GM12878 (cell line): ENCODE measurements at regions of chr17 and their contacts with region 1.

Region 1: GRCh38 chr17:28967221-28968140 is 16.2 kb upstream of the PHF12 start:
- DNase-seq: no peak
- ATAC-seq: peak; percentile 59
- H3K4me3 ChIP-seq: no peak overlapping the region
- H3K27ac ChIP-seq: no peak overlapping the region
- H3K4me1 ChIP-seq: peaks cover 3% of the 10 kb centered on the region; the same call in 1 of the 2 replicates
- H3K27me3 ChIP-seq: peaks cover 0 to 2% of the 10 kb centered on the region in 2 experiments; a peak in 1 of 4 replicates
- CTCF ChIP-seq: no peak
- EP300 ChIP-seq: no peak
- POLR2A ChIP-seq: no peak
- RAD21 ChIP-seq: no peak

Region 2: DNA sequence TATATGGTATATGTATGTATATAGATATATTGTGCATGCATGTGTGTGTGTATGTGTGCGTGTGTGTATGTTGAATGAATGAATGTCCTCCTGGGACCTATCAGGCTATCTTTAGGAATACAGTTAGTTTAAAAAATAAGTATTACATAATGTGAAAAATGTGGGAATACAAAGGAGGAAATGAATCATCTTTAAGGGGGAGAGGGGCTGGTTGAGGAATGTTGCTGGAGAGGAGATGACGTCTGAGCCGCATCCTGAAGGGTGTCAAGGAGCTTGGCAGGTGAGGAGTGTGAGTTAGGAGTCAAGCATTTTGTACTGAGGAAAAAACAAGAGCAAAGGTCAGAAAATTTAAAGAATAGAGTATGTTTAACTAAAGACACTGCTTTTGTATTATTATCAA is 987.4 kb before region 1 on chr17:
- CTCF ChIA-PET with region 1: no interaction called
- POLR2A ChIA-PET with region 1: no interaction called
- RAD21 ChIA-PET with region 1: no interaction called
- SMC1A ChIA-PET with region 1: no interaction called
- in situ Hi-C with region 1: no loop called
- intact Hi-C with region 1: no loop called
- DNase-seq: no peak
- ATAC-seq: no peak
- H3K4me3 ChIP-seq: no peak overlapping the region
- H3K27ac ChIP-seq: no peak overlapping the region
- H3K4me1 ChIP-seq: peaks cover 27% of the 10 kb centered on the region
- H3K27me3 ChIP-seq: no peaks in the 10 kb centered on the region; a peak in 1 of 4 replicates
- CTCF ChIP-seq: no peak
- EP300 ChIP-seq: no peak
- POLR2A ChIP-seq: no peak
- RAD21 ChIP-seq: no peak

Region 3: GRCh38 chr17:28698253-28698941 is 269.1 kb before region 1 on chr17:
- CTCF ChIA-PET with region 1: no interaction called
- POLR2A ChIA-PET with region 1: no interaction called
- RAD21 ChIA-PET with region 1: no interaction called
- SMC1A ChIA-PET with region 1: no interaction called
- in situ Hi-C with region 1: no loop called
- intact Hi-C with region 1: no loop called
- DNase-seq: no peak
- ATAC-seq: no peak
- H3K4me3 ChIP-seq: no peak overlapping the region
- H3K27ac ChIP-seq: no peak overlapping the region
- H3K4me1 ChIP-seq: no peaks in the 10 kb centered on the region
- H3K27me3 ChIP-seq: no peaks in the 10 kb centered on the region
- CTCF ChIP-seq: no peak
- EP300 ChIP-seq: no peak
- POLR2A ChIP-seq: no peak; the same call in 1 of the 2 replicates
- RAD21 ChIP-seq: no peak

Region 4: DNA sequence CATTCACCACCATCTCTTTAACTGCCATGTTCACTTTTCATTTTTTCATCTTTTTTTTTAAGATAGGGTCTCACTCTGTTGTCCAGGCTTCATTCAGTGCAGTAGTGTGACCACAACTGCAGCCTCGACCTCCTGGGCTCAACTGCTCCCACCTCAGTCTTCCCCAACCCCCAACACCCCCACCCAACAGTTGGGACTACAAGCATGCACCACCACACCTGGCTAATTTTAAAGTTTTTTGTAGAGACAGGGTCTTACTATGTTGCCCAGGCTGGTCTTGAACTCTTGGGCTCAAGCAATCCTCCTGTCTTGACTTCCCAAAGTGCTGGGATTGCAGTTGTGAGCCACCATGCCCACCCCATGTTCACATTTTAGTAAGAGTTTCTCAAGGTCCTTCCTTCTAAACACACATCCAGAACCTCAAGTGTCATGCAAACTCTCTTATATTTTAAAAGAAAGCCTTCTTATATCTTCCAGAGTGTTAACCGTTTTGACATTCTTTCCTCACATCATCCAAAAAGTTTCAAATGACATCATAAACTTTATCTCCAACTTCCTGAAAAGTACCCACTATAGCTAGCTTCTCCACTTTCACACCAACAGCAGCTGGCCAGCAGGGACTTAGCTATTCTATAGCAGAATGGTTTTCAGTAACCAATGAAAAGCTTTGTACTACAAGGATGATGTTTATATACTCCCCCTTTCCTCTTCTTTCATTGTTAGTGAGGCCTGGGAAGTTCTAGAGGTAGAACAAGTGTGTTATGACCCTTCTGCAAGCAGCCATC is 174.4 kb before region 1 on chr17:
- CTCF ChIA-PET with region 1: no interaction called
- POLR2A ChIA-PET with region 1: no interaction called
- RAD21 ChIA-PET with region 1: no interaction called
- SMC1A ChIA-PET with region 1: no interaction called
- in situ Hi-C with region 1: no loop called
- intact Hi-C with region 1: no loop called
- DNase-seq: no peak
- ATAC-seq: peak; percentile 66
- H3K4me3 ChIP-seq: no peak overlapping the region
- H3K27ac ChIP-seq: no peak overlapping the region
- H3K4me1 ChIP-seq: no peaks in the 10 kb centered on the region
- H3K27me3 ChIP-seq: no peaks in the 10 kb centered on the region
- CTCF ChIP-seq: no peak
- EP300 ChIP-seq: no peak
- POLR2A ChIP-seq: no peak
- RAD21 ChIP-seq: no peak

Region 5: DNA sequence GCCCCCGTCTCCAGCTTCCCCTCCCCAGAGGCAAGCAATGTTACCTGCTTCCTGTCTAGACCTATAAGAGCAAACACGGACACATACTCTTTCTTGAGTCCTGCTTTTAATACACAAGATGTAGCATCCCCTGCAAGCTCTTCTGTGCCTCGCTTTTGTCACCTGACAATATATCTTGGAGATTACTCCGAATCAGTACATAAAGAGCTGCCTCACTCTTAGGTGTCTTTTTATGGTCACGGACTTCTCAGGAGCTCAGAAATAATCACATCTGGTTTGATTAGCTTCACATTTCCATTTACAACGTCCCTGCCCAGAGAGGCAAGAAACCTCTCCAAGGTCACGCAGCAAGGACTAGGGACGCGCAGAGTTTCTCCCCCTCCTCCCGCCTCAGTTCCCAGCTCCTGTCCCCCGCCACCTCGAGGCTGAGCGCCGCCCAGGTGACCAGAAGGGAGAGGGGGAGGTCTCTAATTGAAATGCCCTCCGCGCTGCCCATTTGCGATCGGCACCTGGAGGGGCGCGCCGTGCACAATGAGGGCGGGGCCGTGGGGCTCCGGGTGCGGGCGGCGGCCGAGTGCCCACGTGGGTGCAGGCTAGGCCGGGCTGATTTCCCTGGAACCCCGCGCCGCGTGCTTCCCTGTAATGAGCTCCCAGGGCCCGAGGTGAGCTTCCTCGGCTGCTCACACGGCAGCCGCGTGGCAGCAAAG is 52.1 kb after region 1 on chr17:
- CTCF ChIA-PET with region 1: interaction called, 13 read pairs
- POLR2A ChIA-PET with region 1: no interaction called
- RAD21 ChIA-PET with region 1: interaction called, 8 read pairs
- SMC1A ChIA-PET with region 1: no interaction called
- in situ Hi-C with region 1: no loop called
- intact Hi-C with region 1: loop called (anchors 5 kb)
- DNase-seq: no peak
- ATAC-seq: peak; percentile 40
- H3K4me3 ChIP-seq: no peak overlapping the region
- H3K27ac ChIP-seq: no peak overlapping the region
- H3K4me1 ChIP-seq: no peaks in the 10 kb centered on the region
- H3K27me3 ChIP-seq: peaks cover 2 to 6% of the 10 kb centered on the region in 2 experiments
- CTCF ChIP-seq: no peak
- EP300 ChIP-seq: no peak
- POLR2A ChIP-seq: no peak
- RAD21 ChIP-seq: no peak

Region 6: GRCh38 chr17:29111816-29112499 is 144.5 kb after region 1 on chr17:
- CTCF ChIA-PET with region 1: interaction called, 415 read pairs
- POLR2A ChIA-PET with region 1: interaction called, 5 read pairs
- RAD21 ChIA-PET with region 1: interaction called, 170 read pairs
- SMC1A ChIA-PET with region 1: interaction called, 68 read pairs
- in situ Hi-C with region 1: no loop called
- intact Hi-C with region 1: loop called (anchors 1 kb)
- DNase-seq: no peak
- ATAC-seq: peak; percentile 93
- H3K4me3 ChIP-seq: no peak overlapping the region
- H3K27ac ChIP-seq: no peak overlapping the region
- H3K4me1 ChIP-seq: no peaks in the 10 kb centered on the region
- H3K27me3 ChIP-seq: no peaks in the 10 kb centered on the region
- CTCF ChIP-seq: peak; percentile 90 to 97 (median 92)
- EP300 ChIP-seq: no peak
- POLR2A ChIP-seq: no peak
- RAD21 ChIP-seq: peak; percentile 70

Region 7: GRCh38 chr17:29124117-29124924 is 156.8 kb after region 1 on chr17:
- CTCF ChIA-PET with region 1: interaction called, 415 read pairs
- POLR2A ChIA-PET with region 1: no interaction called
- RAD21 ChIA-PET with region 1: interaction called, 10 read pairs
- SMC1A ChIA-PET with region 1: interaction called, 4 read pairs
- in situ Hi-C with region 1: loop called (anchors 5 kb)
- intact Hi-C with region 1: no loop called
- DNase-seq: no peak
- ATAC-seq: peak; percentile 97
- H3K4me3 ChIP-seq: no peak overlapping the region
- H3K27ac ChIP-seq: no peak overlapping the region
- H3K4me1 ChIP-seq: no peaks in the 10 kb centered on the region
- H3K27me3 ChIP-seq: no peaks in the 10 kb centered on the region
- CTCF ChIP-seq: peak; percentile 71 to 97 (median 72); a peak in 5 of 6 replicates
- EP300 ChIP-seq: no peak
- POLR2A ChIP-seq: no peak
- RAD21 ChIP-seq: peak; percentile 86